Sciatic nerve (tissue), 2 donors: ENCODE measurements at regions of chr1 and their contacts with region 1.

Region 1: GRCh38 chr1:27392096-27392777 is at the start of gene GPR3:
- DNase-seq: peak; percentile 92
- ATAC-seq: peak; percentile 90
- total RNA-seq, gene GPR3: 0.71 TPM

Region 2: GRCh38 chr1:27300341-27301051 is 91.7 kb before region 1 on chr1:
- intact Hi-C with region 1: loop called (anchors 5 kb)
- DNase-seq: peak; percentile 89
- ATAC-seq: peak; percentile 91

Region 3: GRCh38 chr1:27357281-27358037 is 34.8 kb before region 1 on chr1:
- intact Hi-C with region 1: loop called (anchors 5 kb)
- DNase-seq: peak; percentile 84
- ATAC-seq: peak; percentile 75

Region 4: DNA sequence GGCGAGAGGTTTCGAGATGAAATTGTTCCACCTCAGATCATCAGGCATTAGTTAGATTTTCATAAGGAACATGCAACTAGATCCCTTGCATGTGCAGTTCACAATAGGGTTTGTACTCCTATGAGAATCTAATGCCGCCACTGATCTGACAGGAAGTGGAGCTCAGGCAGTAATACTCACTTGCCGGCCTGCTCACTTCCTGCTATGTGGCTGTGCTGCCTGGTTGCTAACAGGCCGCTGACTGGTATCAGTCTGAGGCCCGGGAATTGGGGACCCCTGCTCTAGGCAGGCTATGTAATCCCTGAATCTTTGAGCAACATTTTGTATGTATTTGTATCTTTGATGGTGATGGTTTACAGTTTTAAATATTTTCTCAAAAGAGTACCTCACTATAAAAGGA is 600.0 kb after region 1 on chr1:
- intact Hi-C with region 1: no loop called
- DNase-seq: no peak
- ATAC-seq: no peak